ENCODE measurements at regions of chr2 and their contacts with region 1.

Region 1: DNA sequence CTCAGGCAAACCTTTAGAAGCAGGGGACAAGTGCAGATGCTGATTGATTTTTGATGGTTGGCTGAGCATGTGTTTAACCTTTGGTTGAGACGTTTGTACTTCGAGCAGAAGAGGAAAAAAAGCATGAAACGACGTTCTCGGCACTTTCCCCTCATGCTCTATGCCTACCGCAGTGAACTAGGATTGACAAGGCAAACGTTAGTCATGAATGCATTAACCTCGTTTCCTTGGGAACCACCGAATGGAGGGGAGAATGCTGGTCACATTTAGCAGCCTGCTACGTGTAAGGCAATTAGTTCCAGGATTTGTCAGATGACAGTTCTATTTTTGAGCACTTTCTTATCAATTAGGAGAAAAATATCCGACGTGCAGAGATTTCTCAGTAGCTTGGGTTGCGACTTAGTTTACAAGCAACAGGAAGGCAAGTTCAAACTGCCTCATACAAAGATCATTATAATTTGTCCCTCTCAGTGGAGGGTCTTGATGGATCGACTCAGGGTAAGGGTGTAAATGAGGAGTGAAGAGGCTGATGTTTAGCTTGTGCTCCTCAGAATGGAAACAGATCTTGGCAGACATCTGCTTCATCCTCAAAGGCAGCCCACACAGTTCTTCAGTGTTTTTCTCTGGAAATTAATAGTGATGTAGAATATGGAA is 47.4 kb upstream of the GPR45 start:
- DNase-seq: no peak
- H3K4me3 ChIP-seq: no peak overlapping the region
- H3K27ac ChIP-seq: no peak overlapping the region
- H3K4me1 ChIP-seq: no peaks in the 10 kb centered on the region
- H3K27me3 ChIP-seq: no peaks in the 10 kb centered on the region
- CTCF ChIP-seq: no peak
- POLR2A ChIP-seq: no peak

Region 2: DNA sequence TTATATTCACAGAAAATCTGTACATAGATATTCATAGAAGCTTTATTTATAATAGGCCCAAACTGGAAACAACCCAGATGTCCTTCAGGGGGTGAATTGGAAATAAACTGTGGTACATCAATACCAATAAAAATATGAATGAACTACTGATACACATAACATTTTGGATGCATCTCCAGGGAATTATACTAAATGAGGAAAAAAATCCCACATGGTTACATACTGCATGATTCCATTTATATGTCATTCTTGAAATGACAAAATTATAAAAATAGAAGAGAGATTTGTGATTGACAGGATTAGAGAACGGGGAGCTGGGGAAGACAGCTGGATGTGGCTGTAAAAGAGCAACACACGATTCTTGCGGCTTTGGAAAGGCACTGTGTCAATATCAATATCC is 1997.3 kb before region 1 on chr2:
- intact Hi-C with region 1: loop called (anchors 10 kb)
- DNase-seq: no peak
- H3K4me3 ChIP-seq: no peak overlapping the region
- H3K27ac ChIP-seq: no peak overlapping the region
- H3K4me1 ChIP-seq: no peaks in the 10 kb centered on the region
- H3K27me3 ChIP-seq: no peaks in the 10 kb centered on the region
- CTCF ChIP-seq: no peak
- POLR2A ChIP-seq: no peak

Region 3: GRCh38 chr2:104897515-104898184 is 296.5 kb before region 1 on chr2:
- intact Hi-C with region 1: no loop called
- DNase-seq: no peak
- H3K4me3 ChIP-seq: no peak overlapping the region
- H3K27ac ChIP-seq: no peak overlapping the region
- H3K4me1 ChIP-seq: no peaks in the 10 kb centered on the region
- H3K27me3 ChIP-seq: peaks cover 0 to 5% of the 10 kb centered on the region in 2 donors
- CTCF ChIP-seq: no peak
- POLR2A ChIP-seq: no peak